ENCODE measurements at regions of chr9 and their contacts with region 1.

Region 1: GRCh38 chr9:5450359-5451091 is at the start of gene CD274:
- DNase-seq: peak; percentile 27 to 82 (median 56)
- ATAC-seq: peak; percentile 100
- H3K4me3 ChIP-seq: peak within 1 kb of the TSS; percentile 46
- H3K27ac ChIP-seq: no peak within 1 kb of the TSS; the same call in 2 of the 3 replicates
- H3K4me1 ChIP-seq: peaks cover 2 to 4% of the 10 kb centered on the region in 2 experiments; a peak in 2 of 5 replicates
- H3K27me3 ChIP-seq: no peaks in the 10 kb centered on the region
- CTCF ChIP-seq: peak; percentile 64 to 69 (median 66)
- EP300 ChIP-seq: no peak
- POLR2A ChIP-seq: no peak; the same call in 1 of the 2 replicates
- RAD21 ChIP-seq: peak; percentile 86 to 88
- polyA plus RNA-seq, gene CD274: 0.32 TPM in 1 of 2 experiments, not detected in the other

Region 2: GRCh38 chr9:4422495-4422894 is 1028.0 kb before region 1 on chr9:
- CTCF ChIA-PET with region 1: no interaction called
- POLR2A ChIA-PET with region 1: no interaction called
- in situ Hi-C with region 1: no loop called
- intact Hi-C with region 1: no loop called
- DNase-seq: no peak
- ATAC-seq: no peak
- H3K4me3 ChIP-seq: no peak overlapping the region
- H3K27ac ChIP-seq: no peak overlapping the region
- H3K4me1 ChIP-seq: no peaks in the 10 kb centered on the region
- H3K27me3 ChIP-seq: no peaks in the 10 kb centered on the region
- CTCF ChIP-seq: no peak
- EP300 ChIP-seq: no peak
- POLR2A ChIP-seq: no peak
- RAD21 ChIP-seq: no peak

Region 3: DNA sequence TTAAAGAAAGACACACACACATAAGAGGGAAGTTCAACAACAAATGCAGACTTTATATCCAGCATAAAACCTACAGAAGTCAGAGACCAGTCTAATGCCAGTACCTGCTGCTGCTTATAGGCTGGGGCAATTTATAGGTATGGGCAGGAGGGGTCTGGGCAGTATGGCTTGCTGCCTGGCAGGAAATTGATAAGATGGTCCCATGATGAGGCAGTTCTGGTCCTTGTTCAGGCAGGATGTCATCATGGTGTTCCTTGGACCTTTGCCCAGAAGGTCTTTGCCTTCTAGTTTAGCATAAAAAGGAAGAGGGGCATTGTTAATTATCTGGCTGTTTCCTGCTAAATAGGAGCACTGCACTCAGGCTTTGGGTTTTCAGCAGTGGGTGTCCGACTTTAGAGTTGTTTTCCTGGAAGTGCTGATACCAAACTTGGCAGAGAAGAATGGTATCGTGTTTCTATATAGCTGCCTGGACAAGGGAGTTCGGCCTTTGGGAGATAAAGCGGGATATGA is 49.4 kb after region 1 on chr9:
- CTCF ChIA-PET with region 1: no interaction called
- POLR2A ChIA-PET with region 1: no interaction called
- in situ Hi-C with region 1: no loop called
- intact Hi-C with region 1: loop called (anchors 5 kb)
- DNase-seq: peak in 2 of 4 experiments; percentile 24 to 73
- ATAC-seq: peak; percentile 69
- H3K4me3 ChIP-seq: no peak overlapping the region
- H3K27ac ChIP-seq: peak overlapping the region; percentile 81
- H3K4me1 ChIP-seq: peaks cover 20 to 21% of the 10 kb centered on the region in 2 experiments; a peak in 4 of 5 replicates
- H3K27me3 ChIP-seq: no peaks in the 10 kb centered on the region
- CTCF ChIP-seq: no peak
- EP300 ChIP-seq: peak; percentile 60; the same call in 1 of the 2 replicates
- POLR2A ChIP-seq: no peak
- RAD21 ChIP-seq: no peak

Measured in K562 (cell line).